ENCODE measurements at regions of chr7 and their contacts with region 1.

Region 1: GRCh38 chr7:45026984-45027773 is 27.2 kb downstream of the CCM2 start:
- DNase-seq: peak in 7 of 9 experiments; percentile 26 to 75 (median 46)
- ATAC-seq: peak; percentile 63
- H3K4me3 ChIP-seq: peak overlapping the region; percentile 74 to 81
- H3K4me3 Mint-ChIP-seq: peak overlapping the region; percentile 87
- H3K27ac ChIP-seq: peak overlapping the region; percentile 73 to 80
- H3K27ac Mint-ChIP-seq: peak overlapping the region; percentile 91
- H3K4me1 ChIP-seq: peaks cover 42% of the 10 kb centered on the region
- H3K4me1 Mint-ChIP-seq: peaks cover 64% of the 10 kb centered on the region
- H3K27me3 ChIP-seq: no peaks in the 10 kb centered on the region
- H3K27me3 Mint-ChIP-seq: no peaks in the 10 kb centered on the region
- CTCF ChIP-seq: no peak

Region 2: DNA sequence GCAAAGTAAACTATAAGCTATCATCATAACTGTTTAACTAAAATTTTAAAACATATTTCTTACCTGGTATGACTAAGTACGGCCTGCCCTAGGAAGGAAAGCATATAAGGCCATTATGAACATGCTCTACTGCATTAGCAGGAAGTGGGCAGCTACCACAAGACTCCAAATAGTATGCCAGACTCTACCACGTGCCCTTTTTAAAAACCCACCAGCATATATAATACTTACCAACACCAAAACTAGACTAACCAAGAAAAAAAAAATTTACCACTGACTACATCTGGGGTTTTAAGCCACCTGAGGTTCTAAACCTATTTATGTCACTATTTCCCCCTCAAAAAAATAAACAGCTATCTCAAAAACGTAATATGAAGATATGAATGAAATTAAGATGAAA is 566.9 kb before region 1 on chr7:
- CTCF ChIA-PET with region 1: no interaction called
- POLR2A ChIA-PET with region 1: no interaction called
- intact Hi-C with region 1: loop called in 1 of 2 experiments (anchors 2 kb)
- DNase-seq: peak; percentile 13 to 92 (median 62)
- ATAC-seq: peak; percentile 95
- H3K4me3 ChIP-seq: peak overlapping the region in 1 of 2 experiments; percentile 5
- H3K4me3 Mint-ChIP-seq: peak overlapping the region; percentile 33
- H3K27ac ChIP-seq: peak overlapping the region in 1 of 2 experiments; percentile 4
- H3K27ac Mint-ChIP-seq: peak overlapping the region; percentile 68
- H3K4me1 ChIP-seq: peaks cover 58% of the 10 kb centered on the region
- H3K4me1 Mint-ChIP-seq: peaks cover 76% of the 10 kb centered on the region
- H3K27me3 ChIP-seq: no peaks in the 10 kb centered on the region
- H3K27me3 Mint-ChIP-seq: no peaks in the 10 kb centered on the region
- CTCF ChIP-seq: no peak

Region 3: DNA sequence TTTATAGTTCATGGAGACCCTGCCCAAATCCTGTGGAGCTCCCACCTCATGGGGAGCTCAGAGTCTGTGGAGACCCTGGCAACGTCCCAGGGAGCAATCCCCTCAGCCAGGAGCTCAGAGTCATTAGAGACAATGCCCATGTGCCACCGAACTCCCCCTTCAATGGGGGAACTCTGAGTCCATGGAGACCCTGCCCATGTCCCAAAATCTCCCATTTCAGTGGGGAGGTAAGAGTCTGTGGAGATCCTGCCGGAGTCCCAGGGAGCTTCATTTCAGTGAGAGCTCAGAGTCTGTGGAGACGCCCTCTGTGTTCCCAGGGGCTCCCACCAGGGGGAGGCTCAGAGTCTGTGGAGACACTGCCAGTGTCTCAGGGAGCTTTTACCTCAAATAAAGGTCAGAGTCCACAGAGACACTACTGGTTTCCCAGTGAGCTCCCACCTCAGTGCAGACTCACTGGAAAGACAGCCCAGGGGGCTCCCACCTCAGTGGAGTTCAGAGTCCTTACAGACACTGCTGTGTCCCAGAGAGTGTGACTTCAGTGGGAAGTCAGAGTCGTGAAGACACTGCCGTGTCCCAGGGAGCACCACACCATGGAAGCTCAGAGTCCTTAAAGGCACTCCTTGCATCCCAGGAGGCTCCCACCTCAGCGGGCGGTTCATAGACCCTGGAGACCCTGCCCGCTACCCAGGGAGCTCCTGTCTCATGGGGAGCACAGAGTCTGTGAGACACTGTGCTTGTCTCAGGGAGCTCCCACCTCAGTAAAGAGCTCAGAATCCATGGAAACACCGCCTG is 53.4 kb before region 1 on chr7:
- CTCF ChIA-PET with region 1: interaction called, 75 read pairs
- POLR2A ChIA-PET with region 1: interaction called, 52 read pairs
- intact Hi-C with region 1: loop called (anchors 1 to 2 kb)
- DNase-seq: peak in 8 of 9 experiments; percentile 47 to 72 (median 67)
- ATAC-seq: peak; percentile 19
- H3K4me3 ChIP-seq: no peak overlapping the region
- H3K4me3 Mint-ChIP-seq: no peak overlapping the region
- H3K27ac ChIP-seq: no peak overlapping the region
- H3K27ac Mint-ChIP-seq: peak overlapping the region; percentile 66
- H3K4me1 ChIP-seq: peaks cover 36% of the 10 kb centered on the region
- H3K4me1 Mint-ChIP-seq: peaks cover 44% of the 10 kb centered on the region
- H3K27me3 ChIP-seq: no peaks in the 10 kb centered on the region
- H3K27me3 Mint-ChIP-seq: no peaks in the 10 kb centered on the region
- CTCF ChIP-seq: peak; percentile 59

Region 4: DNA sequence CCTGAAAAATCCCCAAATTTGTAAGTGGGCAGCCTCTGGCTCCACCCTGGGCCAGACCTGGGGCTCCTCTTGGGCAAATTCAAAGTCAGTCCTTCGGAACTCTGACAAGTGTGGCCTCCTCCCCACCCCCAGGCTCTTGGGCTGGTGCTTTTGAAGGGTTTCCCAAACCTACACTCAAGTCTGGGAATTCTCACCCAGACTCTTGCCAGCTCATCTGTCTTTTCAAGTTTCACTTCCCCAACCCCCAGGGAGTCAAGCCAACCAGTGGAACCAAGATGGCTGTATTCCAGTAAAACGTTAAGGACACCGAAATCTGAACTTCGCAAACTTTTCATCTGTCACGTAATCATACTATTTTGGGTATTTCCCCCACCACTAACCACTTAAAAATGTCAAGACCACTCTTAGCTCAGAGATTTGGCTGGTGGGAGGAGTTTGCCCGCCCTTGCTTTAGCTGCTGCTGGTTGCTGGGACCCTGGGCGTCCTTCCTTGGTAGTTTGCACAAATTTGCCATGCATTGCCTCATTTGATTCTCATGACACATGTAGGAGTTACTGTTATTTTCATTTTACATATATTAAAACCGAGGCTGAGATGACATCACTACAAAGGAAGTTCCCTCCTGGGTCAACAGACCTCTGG is 46.7 kb before region 1 on chr7:
- CTCF ChIA-PET with region 1: interaction called, 75 read pairs
- POLR2A ChIA-PET with region 1: interaction called, 52 read pairs
- intact Hi-C with region 1: loop called (anchors 1 to 2 kb)
- DNase-seq: peak in 6 of 9 experiments; percentile 40 to 95 (median 76)
- ATAC-seq: peak; percentile 43
- H3K4me3 ChIP-seq: no peak overlapping the region
- H3K4me3 Mint-ChIP-seq: peak overlapping the region; percentile 94
- H3K27ac ChIP-seq: peak overlapping the region; percentile 78 to 86
- H3K27ac Mint-ChIP-seq: peak overlapping the region; percentile 99
- H3K4me1 ChIP-seq: peaks cover 72% of the 10 kb centered on the region
- H3K4me1 Mint-ChIP-seq: peaks cover 80% of the 10 kb centered on the region
- H3K27me3 ChIP-seq: no peaks in the 10 kb centered on the region
- H3K27me3 Mint-ChIP-seq: no peaks in the 10 kb centered on the region
- CTCF ChIP-seq: no peak

Region 5: GRCh38 chr7:44986218-44987053 is 40.7 kb before region 1 on chr7:
- CTCF ChIA-PET with region 1: no interaction called
- POLR2A ChIA-PET with region 1: interaction called, 14 read pairs
- intact Hi-C with region 1: no loop called
- DNase-seq: peak; percentile 86 to 98 (median 96)
- ATAC-seq: peak; percentile 93
- H3K4me3 ChIP-seq: peak overlapping the region; percentile 84 to 92
- H3K4me3 Mint-ChIP-seq: peak overlapping the region; percentile 96
- H3K27ac ChIP-seq: peak overlapping the region; percentile 93 to 99
- H3K27ac Mint-ChIP-seq: peak overlapping the region; percentile 98
- H3K4me1 ChIP-seq: peaks cover 37% of the 10 kb centered on the region
- H3K4me1 Mint-ChIP-seq: peaks cover 52% of the 10 kb centered on the region
- H3K27me3 ChIP-seq: no peaks in the 10 kb centered on the region
- H3K27me3 Mint-ChIP-seq: no peaks in the 10 kb centered on the region
- CTCF ChIP-seq: no peak

Region 6: GRCh38 chr7:45013465-45013967 is 13.7 kb before region 1 on chr7:
- CTCF ChIA-PET with region 1: interaction called, 6 read pairs
- POLR2A ChIA-PET with region 1: interaction called, 6 read pairs
- intact Hi-C with region 1: loop called in 1 of 2 experiments (anchors 2 kb)
- DNase-seq: peak in 1 of 9 experiments; percentile 61
- ATAC-seq: peak; percentile 81
- H3K4me3 ChIP-seq: no peak overlapping the region
- H3K4me3 Mint-ChIP-seq: no peak overlapping the region
- H3K27ac ChIP-seq: no peak overlapping the region
- H3K27ac Mint-ChIP-seq: peak overlapping the region; percentile 78
- H3K4me1 ChIP-seq: peaks cover 10% of the 10 kb centered on the region
- H3K4me1 Mint-ChIP-seq: peaks cover 38% of the 10 kb centered on the region
- H3K27me3 ChIP-seq: no peaks in the 10 kb centered on the region
- H3K27me3 Mint-ChIP-seq: no peaks in the 10 kb centered on the region
- CTCF ChIP-seq: no peak

Region 7: GRCh38 chr7:45069444-45070253 is 42.5 kb after region 1 on chr7:
- CTCF ChIA-PET with region 1: no interaction called
- POLR2A ChIA-PET with region 1: interaction called, 3 read pairs
- intact Hi-C with region 1: loop called in 1 of 2 experiments (anchors 5 kb)
- DNase-seq: no peak
- ATAC-seq: no peak
- H3K4me3 ChIP-seq: no peak overlapping the region
- H3K4me3 Mint-ChIP-seq: no peak overlapping the region
- H3K27ac ChIP-seq: no peak overlapping the region
- H3K27ac Mint-ChIP-seq: peak overlapping the region; percentile 37
- H3K4me1 ChIP-seq: no peaks in the 10 kb centered on the region
- H3K4me1 Mint-ChIP-seq: peaks cover 18% of the 10 kb centered on the region
- H3K27me3 ChIP-seq: no peaks in the 10 kb centered on the region
- H3K27me3 Mint-ChIP-seq: no peaks in the 10 kb centered on the region
- CTCF ChIP-seq: no peak

Measured in CD8-positive, alpha-beta T cell (primary cell).